Activated B cell treated with CpG ODN at 0.5 μM for 24 hours (primary cell): ENCODE measurements at regions of chr19 and their contacts with region 1.

Region 1: GRCh38 chr19:13986348-13986904 is 19.7 kb downstream of the RFX1 start:
- DNase-seq: peak; percentile 94
- ATAC-seq: peak; percentile 83
- H3K4me3 Mint-ChIP-seq: peak overlapping the region; percentile 60
- H3K27ac Mint-ChIP-seq: peak overlapping the region; percentile 97
- H3K4me1 Mint-ChIP-seq: peaks cover 78% of the 10 kb centered on the region
- H3K27me3 Mint-ChIP-seq: no peaks in the 10 kb centered on the region
- CTCF ChIP-seq: no peak

Region 2: GRCh38 chr19:14015524-14016035 is 29.2 kb after region 1 on chr19:
- CTCF ChIA-PET with region 1: interaction called, 4 read pairs
- POLR2A ChIA-PET with region 1: interaction called, 11 read pairs
- intact Hi-C with region 1: loop called (anchors 1 kb)
- DNase-seq: no peak
- ATAC-seq: peak; percentile 76
- H3K4me3 Mint-ChIP-seq: peak overlapping the region; percentile 46
- H3K27ac Mint-ChIP-seq: peak overlapping the region; percentile 79
- H3K4me1 Mint-ChIP-seq: peaks cover 42% of the 10 kb centered on the region
- H3K27me3 Mint-ChIP-seq: no peaks in the 10 kb centered on the region
- CTCF ChIP-seq: no peak